ENCODE measurements at regions of chr11 and their contacts with region 1.

Region 1: DNA sequence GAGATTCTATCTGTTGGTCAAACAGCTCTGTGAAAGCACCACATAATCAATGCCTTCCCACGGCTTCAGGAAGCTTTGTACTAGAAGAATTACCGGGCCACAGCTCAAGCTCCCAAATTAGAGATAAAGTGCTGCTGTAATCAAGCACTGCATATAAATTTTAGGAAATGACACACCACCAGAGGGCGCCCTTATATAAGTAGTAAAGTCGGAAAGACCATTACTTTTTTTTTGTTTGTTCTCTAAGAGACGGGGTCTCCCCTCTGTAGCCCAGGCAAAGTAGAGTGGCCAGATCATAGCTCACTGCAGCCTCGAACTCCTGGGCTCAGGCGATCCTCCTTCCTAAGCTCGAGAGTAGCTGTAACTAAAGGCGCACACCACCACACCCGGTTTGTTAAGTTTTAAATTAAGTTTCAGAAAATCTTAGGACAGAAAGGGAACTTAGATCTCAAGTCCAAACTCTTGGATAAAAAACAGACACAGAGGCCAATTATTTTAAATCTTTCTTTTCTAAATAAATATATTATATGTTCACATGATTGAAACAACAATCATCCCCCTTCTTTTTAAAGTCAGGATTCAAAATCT is 32.6 kb downstream of the PRCP start:
- DNase-seq: no peak
- H3K4me3 ChIP-seq: peak overlapping the region; percentile 24
- CTCF ChIP-seq: peak; percentile 52

Region 2: DNA sequence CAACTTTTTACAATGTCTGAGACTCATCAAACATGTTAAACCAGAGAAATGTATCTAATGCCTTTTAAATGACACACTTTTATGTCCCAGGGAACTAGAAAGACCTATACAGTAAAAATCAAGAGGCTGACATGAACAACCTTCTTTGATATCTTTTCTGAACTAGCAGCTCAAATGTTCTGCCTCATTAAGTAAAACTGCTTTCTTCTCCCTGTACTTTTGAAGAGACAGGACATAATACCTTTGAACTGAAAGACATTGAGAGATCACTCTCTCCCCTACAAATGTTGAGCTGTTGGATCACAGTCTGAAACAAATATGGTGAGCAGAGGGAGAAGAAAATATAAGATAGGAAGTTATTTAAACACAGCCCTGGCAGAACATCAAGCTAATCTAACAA is 256.9 kb before region 1 on chr11:
- CTCF ChIA-PET with region 1: no interaction called
- POLR2A ChIA-PET with region 1: no interaction called
- DNase-seq: no peak
- H3K4me3 ChIP-seq: no peak overlapping the region
- CTCF ChIP-seq: no peak

Region 3: GRCh38 chr11:82775736-82776346 is 91.7 kb before region 1 on chr11:
- CTCF ChIA-PET with region 1: interaction called, 39 read pairs
- POLR2A ChIA-PET with region 1: no interaction called
- DNase-seq: no peak
- H3K4me3 ChIP-seq: no peak overlapping the region
- CTCF ChIP-seq: peak; percentile 81

Region 4: DNA sequence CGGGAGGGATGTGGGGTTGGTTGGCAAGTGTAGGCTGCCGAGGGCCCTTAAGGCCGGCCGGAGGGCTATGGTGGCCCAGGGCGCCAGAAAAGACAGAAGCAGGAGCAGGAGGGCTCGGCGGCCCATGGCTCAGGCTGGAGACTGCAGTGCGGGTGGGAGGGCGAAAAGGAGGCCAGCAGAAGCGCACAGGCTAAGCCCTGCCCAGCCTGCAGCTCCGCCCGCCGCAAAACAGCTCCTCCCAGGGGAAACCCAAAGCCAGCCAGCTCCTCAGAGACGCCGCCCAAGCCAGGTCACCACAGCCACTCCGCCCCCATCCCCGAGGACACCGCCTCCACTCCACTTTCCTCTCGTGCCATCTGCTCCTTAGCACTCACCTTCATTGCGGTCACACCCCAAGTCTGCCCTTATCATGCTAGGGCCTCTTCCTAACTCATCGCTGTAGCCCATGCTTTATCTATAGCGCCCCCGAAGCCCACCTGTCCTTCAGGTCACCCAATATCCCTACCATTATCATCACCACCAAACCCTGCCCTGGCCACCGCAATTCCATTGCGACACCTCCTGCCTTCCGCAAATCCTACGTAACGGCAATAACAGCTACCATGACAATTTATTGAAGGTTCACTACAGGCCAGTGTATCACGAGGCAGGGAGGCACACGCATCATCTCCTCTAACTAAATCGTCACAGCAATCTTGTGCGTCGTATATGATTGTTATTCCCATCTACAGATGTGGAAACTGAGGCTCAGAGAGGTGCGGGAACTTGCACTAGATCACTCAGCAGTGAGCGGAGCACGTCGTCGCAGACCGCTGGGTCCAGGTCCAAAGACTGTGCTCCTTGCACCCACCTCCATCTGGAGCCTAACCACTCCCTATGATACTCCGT is 32.9 kb after region 1 on chr11 and contains the start of gene PRCP:
- CTCF ChIA-PET with region 1: interaction called, 60 read pairs
- POLR2A ChIA-PET with region 1: no interaction called
- DNase-seq: peak; percentile 31
- H3K4me3 ChIP-seq: peak within 1 kb of the TSS; percentile 86
- CTCF ChIP-seq: no peak

Region 5: DNA sequence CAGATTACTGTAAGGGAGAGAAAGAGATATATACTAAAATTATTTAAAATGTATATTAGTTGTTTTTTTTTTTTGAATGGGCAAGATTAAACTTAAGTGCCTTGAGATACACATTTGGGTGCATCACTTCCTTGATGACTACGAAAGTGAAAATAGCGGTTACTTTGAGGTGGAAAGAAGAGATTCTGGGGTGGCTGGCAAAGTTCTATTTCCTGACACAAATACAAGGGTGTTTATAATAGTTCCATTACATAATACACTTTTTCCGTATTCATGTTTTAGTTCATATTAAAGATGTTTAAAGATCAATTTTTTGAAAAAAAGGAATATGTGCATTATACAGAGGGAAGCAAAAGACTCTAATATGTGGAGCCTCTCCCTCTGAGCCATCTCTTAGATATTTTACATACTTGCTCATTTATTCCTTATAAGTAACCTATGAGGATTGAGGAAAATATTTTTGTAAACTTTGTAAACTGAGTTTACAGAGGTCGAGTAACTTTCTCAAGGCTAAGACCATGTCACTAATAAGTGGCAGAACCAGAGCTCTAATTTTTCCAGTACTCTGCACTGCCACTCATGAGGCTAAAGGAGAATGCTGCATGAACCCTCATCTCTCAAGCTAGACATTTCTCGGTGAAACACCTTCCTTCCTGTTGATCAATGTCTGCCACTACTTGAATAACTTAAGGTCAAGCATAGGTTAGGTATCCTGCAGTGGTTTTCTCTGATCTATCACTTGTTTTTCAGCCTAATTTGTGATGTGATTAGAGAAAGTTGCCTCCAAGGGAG is 92.6 kb after region 1 on chr11:
- CTCF ChIA-PET with region 1: no interaction called
- POLR2A ChIA-PET with region 1: no interaction called
- DNase-seq: no peak
- H3K4me3 ChIP-seq: no peak overlapping the region
- CTCF ChIP-seq: no peak

Region 6: GRCh38 chr11:83285771-83286528 is 418.4 kb after region 1 on chr11 and contains the start of gene CCDC90B:
- CTCF ChIA-PET with region 1: interaction called, 24 read pairs
- POLR2A ChIA-PET with region 1: no interaction called
- DNase-seq: peak; percentile 84
- H3K4me3 ChIP-seq: peak within 1 kb of the TSS; percentile 94
- CTCF ChIP-seq: no peak

Measured in AG04449 (cell line).